ENCODE measurements at regions of chr11 and their contacts with region 1.

Region 1: GRCh38 chr11:18243783-18244362 is 4.6 kb downstream of the SAA2 start:
- DNase-seq: peak; percentile 77
- ATAC-seq: no peak
- H3K4me3 Mint-ChIP-seq: no peak overlapping the region
- H3K27ac Mint-ChIP-seq: no peak overlapping the region
- H3K4me1 Mint-ChIP-seq: peaks cover 11% of the 10 kb centered on the region
- H3K27me3 Mint-ChIP-seq: peaks cover 7% of the 10 kb centered on the region

Region 2: DNA sequence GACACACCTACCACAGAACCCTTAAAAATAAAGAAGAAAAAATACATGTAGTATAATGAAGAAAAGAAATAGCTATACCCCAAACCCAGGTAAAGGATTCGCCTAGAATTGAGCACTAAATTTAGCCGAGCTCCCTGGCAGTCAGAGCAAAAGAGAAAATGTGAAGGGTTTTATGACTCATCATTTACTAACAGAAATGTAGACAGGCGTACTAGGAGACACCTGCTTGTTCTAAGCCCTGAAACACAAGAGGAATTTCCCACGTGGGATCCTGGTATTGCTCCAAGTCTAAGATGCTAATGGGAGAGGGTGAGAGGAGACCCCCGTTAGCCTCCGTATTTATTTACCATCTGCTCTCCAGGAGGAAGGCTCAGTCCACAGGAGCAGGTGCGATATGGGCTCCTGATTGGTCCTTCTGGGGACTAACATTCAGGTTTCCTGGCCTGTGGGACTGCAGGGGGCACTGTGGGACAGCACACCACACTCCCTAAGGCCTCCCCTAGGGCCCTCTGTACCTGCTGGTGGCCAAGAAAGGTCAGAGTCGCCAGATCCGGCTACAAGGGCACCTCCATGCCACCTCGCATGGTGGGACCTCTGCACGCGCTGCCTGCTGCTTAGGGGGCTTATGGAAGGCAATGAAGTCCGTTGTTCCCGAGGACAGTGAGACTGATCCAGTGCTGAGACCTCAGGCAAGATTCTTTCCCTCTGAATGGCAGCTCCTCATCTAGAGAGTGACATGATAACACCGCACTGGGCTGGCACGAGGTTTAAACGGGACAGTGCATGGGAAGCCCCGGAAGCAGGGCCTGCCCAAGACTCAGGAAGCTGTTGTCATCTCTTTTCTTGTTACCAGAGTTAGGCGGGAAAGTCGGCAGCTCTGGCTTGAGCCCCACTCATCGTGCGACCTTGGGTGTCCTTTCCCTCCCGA is 483.5 kb before region 1 on chr11:
- CTCF ChIA-PET with region 1: no interaction called
- POLR2A ChIA-PET with region 1: no interaction called
- intact Hi-C with region 1: no loop called
- DNase-seq: peak; percentile 62
- ATAC-seq: peak; percentile 90
- H3K4me3 Mint-ChIP-seq: no peak overlapping the region
- H3K27ac Mint-ChIP-seq: no peak overlapping the region
- H3K4me1 Mint-ChIP-seq: peaks cover 2% of the 10 kb centered on the region
- H3K27me3 Mint-ChIP-seq: peaks cover 6% of the 10 kb centered on the region

Region 3: DNA sequence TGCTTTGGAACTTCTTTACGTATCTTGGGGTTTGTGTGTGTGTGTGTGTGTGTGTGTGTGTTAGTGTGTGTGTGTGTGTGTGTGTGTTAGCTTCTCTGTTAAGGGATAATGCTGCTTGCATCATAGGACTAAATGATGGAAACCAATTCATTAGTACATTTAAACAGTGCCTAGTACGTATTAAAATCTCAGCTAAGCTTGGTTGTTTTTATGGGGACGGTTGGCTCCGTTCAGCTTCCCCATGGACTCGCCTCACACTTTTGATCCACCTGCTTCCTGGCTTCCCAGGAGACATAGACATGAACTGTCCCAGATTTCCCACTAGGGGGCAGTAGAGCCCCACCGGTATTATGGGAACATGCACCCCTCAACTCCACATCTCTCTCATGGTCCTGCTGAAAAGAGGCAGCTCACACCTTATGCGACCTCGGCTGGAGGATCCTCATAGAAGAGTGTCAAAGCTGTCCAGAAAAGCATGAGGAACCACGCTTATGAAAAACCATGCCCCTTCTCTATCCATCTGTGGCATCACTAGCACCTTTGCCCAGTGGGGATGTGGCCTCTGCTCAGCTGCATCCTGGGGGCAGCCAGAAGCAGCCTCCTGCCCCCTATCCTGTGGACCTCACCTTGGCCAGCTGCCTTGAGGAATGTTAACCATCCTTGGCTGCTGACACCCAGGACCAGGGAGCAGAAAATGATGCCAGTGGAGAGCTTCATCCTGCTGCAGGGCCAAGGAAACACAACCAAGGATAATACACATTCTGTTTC is 128.3 kb before region 1 on chr11:
- CTCF ChIA-PET with region 1: interaction called, 10 read pairs
- POLR2A ChIA-PET with region 1: no interaction called
- intact Hi-C with region 1: no loop called
- DNase-seq: peak; percentile 79
- ATAC-seq: peak; percentile 91
- H3K4me3 Mint-ChIP-seq: no peak overlapping the region
- H3K27ac Mint-ChIP-seq: no peak overlapping the region
- H3K4me1 Mint-ChIP-seq: peaks cover 6% of the 10 kb centered on the region
- H3K27me3 Mint-ChIP-seq: peaks cover 24% of the 10 kb centered on the region

Region 4: GRCh38 chr11:18294862-18295261 is 51.0 kb after region 1 on chr11:
- CTCF ChIA-PET with region 1: interaction called, 10 read pairs
- POLR2A ChIA-PET with region 1: no interaction called
- intact Hi-C with region 1: no loop called
- DNase-seq: peak; percentile 19
- ATAC-seq: peak; percentile 94
- H3K4me3 Mint-ChIP-seq: no peak overlapping the region
- H3K27ac Mint-ChIP-seq: no peak overlapping the region
- H3K4me1 Mint-ChIP-seq: peaks cover 13% of the 10 kb centered on the region
- H3K27me3 Mint-ChIP-seq: no peaks in the 10 kb centered on the region

Region 5: GRCh38 chr11:18395735-18396504 is 152.0 kb after region 1 on chr11:
- CTCF ChIA-PET with region 1: interaction called, 3 read pairs
- POLR2A ChIA-PET with region 1: no interaction called
- intact Hi-C with region 1: loop called in 1 of 2 experiments (anchors 10 kb)
- DNase-seq: peak; percentile 96
- ATAC-seq: peak; percentile 65
- H3K4me3 Mint-ChIP-seq: peak overlapping the region; percentile 97
- H3K27ac Mint-ChIP-seq: peak overlapping the region; percentile 99
- H3K4me1 Mint-ChIP-seq: peaks cover 65% of the 10 kb centered on the region
- H3K27me3 Mint-ChIP-seq: no peaks in the 10 kb centered on the region

Region 6: DNA sequence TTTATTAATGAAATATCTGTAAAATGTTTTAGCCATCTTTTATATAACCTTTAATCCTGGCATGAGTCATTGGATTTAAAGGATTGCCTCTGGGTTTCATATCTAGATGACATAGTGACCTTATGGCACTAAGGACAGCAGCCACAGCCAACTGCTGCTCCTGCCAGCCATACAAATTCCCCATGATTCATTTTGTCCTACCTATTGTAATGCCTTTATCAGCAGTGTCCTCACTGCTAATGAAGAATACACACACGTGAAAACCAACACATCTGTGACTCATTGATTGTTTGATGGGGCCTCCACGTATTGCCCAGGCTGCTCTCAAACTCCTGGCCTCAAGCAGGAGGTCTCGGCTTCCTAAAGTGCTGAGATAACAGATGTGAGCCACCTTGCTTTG is 213.6 kb after region 1 on chr11:
- CTCF ChIA-PET with region 1: no interaction called
- POLR2A ChIA-PET with region 1: no interaction called
- intact Hi-C with region 1: no loop called
- DNase-seq: no peak
- ATAC-seq: peak; percentile 26
- H3K4me3 Mint-ChIP-seq: no peak overlapping the region
- H3K27ac Mint-ChIP-seq: no peak overlapping the region
- H3K4me1 Mint-ChIP-seq: peaks cover 2% of the 10 kb centered on the region
- H3K27me3 Mint-ChIP-seq: peaks cover 4% of the 10 kb centered on the region

Region 7: GRCh38 chr11:18684267-18684666 is 440.4 kb after region 1 on chr11:
- CTCF ChIA-PET with region 1: no interaction called
- POLR2A ChIA-PET with region 1: no interaction called
- intact Hi-C with region 1: no loop called
- DNase-seq: no peak
- ATAC-seq: no peak
- H3K4me3 Mint-ChIP-seq: no peak overlapping the region
- H3K27ac Mint-ChIP-seq: no peak overlapping the region
- H3K4me1 Mint-ChIP-seq: peaks cover 4% of the 10 kb centered on the region
- H3K27me3 Mint-ChIP-seq: no peaks in the 10 kb centered on the region

Region 8: DNA sequence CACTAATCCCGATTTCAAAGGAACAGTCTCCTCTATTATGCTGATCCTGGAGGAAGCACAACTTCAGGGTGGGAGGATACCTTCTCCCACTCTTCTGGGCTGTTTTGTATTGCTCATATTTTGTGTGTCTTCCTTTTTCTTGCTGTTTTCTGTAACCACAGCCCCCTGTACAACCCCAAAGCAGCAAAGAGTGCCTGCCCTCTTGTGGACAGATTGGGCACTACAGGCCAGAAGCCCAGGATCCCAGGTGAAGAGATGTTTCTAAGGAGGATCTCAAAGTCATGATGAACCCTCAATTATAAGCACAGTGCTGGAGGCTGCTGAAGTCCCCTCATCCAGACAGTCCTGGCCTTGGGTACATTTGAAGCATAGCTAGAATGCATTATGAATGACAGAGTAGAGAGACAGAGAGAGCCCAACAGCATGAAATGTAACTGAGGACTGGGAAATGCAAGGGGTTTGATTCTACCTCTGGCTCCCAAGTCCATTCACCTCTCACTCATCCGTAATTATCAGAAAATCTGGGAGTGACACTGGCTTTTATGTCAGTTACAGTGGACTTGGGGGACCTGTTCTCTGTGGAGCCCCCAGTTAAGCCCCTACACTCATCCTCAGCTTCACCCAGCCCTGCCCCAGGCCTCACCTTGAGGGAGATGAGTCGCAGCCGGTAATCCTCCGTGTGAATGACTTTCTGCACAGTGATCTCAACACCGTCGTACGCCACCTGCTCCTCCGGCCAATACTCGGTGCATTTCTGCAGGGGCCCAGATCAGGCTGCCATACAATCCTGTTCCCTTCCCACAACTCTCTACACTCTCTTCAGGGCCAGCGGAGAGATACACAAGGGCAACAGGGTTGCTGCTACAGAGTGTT is 488.3 kb after region 1 on chr11:
- CTCF ChIA-PET with region 1: interaction called, 5 read pairs
- POLR2A ChIA-PET with region 1: no interaction called
- intact Hi-C with region 1: loop called (anchors 2 to 10 kb)
- DNase-seq: peak; percentile 78
- ATAC-seq: peak; percentile 73
- H3K4me3 Mint-ChIP-seq: no peak overlapping the region
- H3K27ac Mint-ChIP-seq: no peak overlapping the region
- H3K4me1 Mint-ChIP-seq: peaks cover 3% of the 10 kb centered on the region
- H3K27me3 Mint-ChIP-seq: no peaks in the 10 kb centered on the region

Region 9: DNA sequence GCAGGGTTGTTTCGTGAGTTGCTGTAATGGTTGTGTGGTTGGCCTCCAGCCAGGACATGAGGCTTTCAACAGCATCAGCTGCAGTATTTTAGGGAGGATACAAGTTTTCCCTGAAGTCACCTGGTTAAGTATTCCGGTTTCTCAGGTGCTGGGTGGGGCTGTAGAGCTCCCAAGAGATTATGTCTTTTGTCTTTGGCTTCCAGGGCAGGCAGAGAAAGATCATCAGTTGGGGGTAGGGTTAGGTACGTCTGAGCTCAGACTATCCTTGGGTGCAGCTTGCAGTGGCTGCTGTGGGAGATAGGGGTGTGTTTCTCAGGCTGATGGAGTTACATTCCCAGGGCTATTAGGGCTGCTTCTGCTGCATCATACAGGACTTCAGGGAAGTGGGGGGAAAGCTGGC is 742.9 kb after region 1 on chr11:
- CTCF ChIA-PET with region 1: no interaction called
- POLR2A ChIA-PET with region 1: no interaction called
- intact Hi-C with region 1: no loop called
- DNase-seq: no peak
- ATAC-seq: no peak
- H3K4me3 Mint-ChIP-seq: no peak overlapping the region
- H3K27ac Mint-ChIP-seq: no peak overlapping the region
- H3K4me1 Mint-ChIP-seq: no peaks in the 10 kb centered on the region
- H3K27me3 Mint-ChIP-seq: peaks cover 8% of the 10 kb centered on the region